Thyroid gland (tissue), 4 donors: ENCODE measurements at regions of chr6 and their contacts with region 1.

Region 1: DNA sequence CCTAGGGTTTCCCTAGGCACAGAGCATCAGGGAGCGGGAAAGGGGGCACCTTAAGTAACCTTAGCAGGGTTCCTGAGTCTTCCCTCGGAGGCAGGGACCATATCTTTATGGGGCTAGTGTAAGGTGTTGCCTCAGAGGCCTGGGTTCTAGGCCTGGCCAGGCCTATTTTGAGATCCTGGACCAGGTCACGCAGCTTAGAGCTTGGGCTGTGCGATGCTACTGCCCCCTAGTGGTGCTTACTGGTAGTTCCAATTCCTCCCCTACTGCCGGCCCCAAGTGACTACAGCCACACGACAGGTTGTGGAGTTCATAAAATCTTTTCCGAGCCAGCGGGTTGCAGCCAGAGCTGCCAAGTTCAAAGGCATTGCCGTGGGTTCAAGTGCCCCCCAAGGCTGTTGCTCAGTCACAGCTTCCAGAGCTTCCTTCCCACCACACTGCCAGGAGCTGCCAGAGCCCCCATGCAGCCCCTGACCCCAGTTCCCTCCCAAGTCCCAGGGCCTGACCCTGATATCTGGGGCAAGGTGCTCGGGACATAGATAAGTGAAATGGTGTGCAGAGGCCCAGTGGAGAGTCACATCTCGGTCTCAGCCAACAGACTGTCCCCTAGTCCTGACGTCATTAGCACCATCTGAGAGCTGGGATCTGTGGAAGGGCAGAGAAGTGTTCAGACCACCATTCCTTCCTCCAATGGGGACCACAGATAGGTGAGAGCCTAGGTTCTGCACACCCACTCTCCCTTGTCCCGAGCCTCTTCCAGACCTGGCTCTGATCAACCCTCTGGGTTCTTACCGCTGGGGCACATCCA is 3.3 kb downstream of the LRRC73 start:
- DNase-seq: peak; percentile 73 to 76
- H3K4me3 ChIP-seq: no peak overlapping the region
- H3K27ac ChIP-seq: no peak overlapping the region
- H3K4me1 ChIP-seq: peaks cover 11 to 17% of the 10 kb centered on the region in 2 donors
- H3K27me3 ChIP-seq: no peaks in the 10 kb centered on the region
- CTCF ChIP-seq: peak; percentile 85 to 99 (median 88)
- POLR2A ChIP-seq: no peak

Region 2: DNA sequence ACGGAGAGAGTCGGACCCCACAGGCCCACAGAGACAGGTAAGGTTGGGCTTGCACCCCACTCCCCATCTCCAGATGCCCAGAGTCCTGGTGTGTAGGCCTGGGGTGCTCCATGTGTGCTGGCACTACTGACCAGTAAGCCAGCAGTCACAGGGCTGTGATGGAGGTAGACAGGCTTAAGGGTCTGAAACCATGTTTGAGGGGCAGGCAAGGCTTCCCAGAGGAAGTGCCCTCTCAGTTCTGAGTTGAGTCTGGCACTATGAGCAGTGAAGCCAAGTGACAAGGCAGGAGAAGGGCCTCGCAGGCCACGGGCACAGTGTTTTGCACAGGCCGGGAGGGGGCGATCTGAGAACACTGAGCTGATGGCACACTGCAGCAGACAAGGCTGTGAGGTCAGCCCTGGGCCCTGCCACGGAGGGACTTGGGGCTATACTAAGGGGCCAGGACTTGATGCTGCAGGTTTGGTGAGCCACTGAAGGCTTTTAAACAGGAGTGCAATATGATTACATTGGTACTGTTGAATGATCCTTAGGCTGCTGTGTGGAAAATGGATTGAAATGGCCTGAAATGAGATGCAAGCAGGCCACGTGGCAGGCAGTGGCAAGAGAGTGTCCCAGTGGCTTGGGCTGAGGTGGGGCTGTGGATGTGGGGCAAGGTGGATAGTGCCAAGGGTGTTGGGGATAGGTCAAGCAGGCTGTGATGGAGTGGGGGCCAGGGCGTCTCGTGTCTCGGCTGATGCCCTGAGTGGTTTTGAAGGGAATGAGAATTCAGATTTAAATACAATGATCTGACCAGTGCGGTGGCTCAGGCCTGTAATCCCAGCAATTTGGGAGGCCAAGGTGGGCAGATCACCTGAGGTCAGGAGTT is 243.3 kb before region 1 on chr6:
- intact Hi-C with region 1: loop called (anchors 5 kb)
- DNase-seq: peak; percentile 75 to 81
- H3K4me3 ChIP-seq: no peak overlapping the region
- H3K27ac ChIP-seq: no peak overlapping the region
- H3K4me1 ChIP-seq: peaks cover 0 to 8% of the 10 kb centered on the region in 2 donors
- H3K27me3 ChIP-seq: no peaks in the 10 kb centered on the region
- CTCF ChIP-seq: peak; percentile 20 to 77 (median 64)
- POLR2A ChIP-seq: no peak

Region 3: GRCh38 chr6:43369174-43370022 is 137.5 kb before region 1 on chr6 and contains the start of gene ZNF318:
- intact Hi-C with region 1: loop called (anchors 10 kb)
- DNase-seq: peak; percentile 97
- H3K4me3 ChIP-seq: peak within 1 kb of the TSS; percentile 56 to 69 (median 68)
- H3K27ac ChIP-seq: peak within 1 kb of the TSS; percentile 37 to 80 (median 68)
- H3K4me1 ChIP-seq: peaks cover 15 to 25% of the 10 kb centered on the region in 2 donors
- H3K27me3 ChIP-seq: no peaks in the 10 kb centered on the region
- CTCF ChIP-seq: no peak
- POLR2A ChIP-seq: peak in 1 of 2 donors; percentile 72
- total RNA-seq, gene ZNF318: 32.4 to 84.6 (median 37.5) TPM

Region 4: DNA sequence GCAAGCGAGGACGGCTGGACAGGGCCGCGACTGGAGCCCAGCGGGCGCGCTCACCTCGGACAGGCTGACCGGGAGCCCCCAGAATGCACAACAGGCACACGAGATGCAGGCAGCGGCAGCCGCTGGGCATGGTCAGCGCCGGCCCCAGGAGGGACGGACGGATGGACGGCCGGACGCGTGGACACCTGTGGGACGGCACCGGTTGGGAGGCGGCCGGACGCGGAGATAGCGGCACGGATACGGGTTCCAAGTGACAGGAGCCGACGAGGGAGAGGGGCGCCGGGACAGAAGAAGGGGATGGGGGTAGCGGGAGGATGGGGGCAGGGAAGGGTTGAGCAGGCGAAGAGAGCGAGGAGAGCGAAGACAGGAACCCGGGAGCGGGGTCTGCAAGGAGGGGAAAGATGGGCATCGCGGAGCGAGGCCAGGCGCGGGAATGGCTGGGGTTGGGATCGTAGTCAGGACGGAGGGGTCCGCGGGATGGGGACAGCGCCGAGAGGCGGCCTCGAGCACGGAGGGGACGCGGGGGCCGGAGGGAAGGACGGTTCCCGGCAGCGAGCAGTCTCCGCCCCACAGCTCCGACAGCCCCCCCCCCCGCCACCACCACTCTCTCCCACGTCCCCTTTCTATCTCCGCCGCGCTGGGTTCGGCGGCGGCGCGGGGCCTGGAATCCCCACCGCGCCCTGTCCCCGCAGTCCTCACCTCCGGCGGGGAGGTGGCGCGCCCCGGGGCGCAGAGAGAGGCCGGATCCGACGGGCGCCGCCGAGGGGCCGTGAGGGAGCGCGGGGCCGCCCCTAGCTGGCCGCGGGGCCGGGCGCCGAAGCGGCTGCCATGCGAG is 52.0 kb before region 1 on chr6:
- intact Hi-C with region 1: loop called (anchors 2 kb)
- DNase-seq: peak; percentile 81
- H3K4me3 ChIP-seq: peak overlapping the region; percentile 15 to 36 (median 17)
- H3K27ac ChIP-seq: no peak overlapping the region
- H3K4me1 ChIP-seq: peaks cover 5 to 17% of the 10 kb centered on the region in 2 donors
- H3K27me3 ChIP-seq: peaks cover 9% of the 10 kb centered on the region
- CTCF ChIP-seq: no peak
- POLR2A ChIP-seq: no peak